ENCODE measurements at regions of chr6 and their contacts with region 1.

Region 1: DNA sequence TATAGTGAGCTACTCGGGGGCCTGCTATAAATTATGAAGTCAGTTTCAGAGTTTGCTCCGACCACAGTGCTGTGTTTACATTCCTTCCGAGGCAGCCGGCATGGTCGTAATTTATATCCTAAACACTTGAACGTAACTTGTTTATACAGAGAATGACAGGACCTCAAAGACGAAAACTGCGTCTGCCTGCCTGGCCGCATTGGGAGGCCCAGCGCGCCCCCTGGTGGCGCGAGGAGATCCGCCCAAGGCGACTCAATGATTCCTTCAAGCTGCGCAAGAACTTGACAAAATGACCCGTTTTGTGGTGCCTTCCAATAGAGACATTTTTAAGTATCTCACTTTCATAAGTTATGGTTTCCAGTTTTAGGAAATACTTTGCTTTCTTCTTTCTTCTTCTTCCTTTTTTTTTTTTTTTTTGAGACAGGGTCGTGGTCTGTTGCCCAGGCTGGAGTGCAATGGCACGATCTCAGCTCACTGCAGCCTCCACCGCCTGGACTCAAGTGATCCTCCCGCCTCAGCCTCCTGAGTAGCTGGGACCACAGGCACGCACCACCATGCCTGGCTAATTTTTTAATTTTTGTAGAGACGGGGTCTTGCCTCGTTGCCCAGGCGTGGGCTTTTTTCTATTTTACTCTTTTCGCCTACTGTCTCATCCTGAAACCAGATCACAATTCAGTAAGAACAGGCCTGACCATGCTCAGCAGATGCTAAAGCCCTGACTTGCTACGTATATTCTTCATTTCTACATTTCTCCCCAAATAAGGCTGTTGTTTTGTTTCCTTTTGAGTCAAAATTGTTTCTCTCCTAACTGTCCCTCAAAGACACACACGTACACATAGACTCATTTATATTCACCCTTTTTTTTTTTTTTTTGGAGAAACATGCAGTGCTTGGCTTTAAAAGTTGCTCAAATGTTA is 7.8 kb downstream of the FOXF2 start:
- DNase-seq: peak; percentile 80
- ATAC-seq: peak; percentile 82

Region 2: DNA sequence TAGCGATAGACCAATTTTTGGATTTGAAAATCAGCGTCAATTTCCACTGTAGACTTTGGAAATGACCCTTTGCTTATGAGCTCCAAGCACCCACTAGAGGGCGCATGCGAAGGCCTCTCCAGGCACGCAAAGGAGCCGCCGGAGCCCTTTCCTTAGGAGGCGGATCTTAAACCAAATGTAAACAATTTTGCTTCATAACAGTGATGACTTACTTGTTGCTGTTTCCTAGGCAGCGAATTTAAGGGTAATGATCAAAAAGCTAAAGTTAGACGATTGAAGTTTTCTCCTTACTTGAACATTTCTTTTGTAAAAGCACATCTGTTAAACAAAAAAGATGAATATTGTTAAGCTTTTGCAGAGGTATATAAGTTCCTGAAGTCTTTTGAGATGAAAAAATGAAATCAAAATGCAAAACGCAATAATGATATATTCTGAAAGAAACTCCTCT is 675.1 kb before region 1 on chr6:
- intact Hi-C with region 1: loop called (anchors 10 kb)
- DNase-seq: peak; percentile 82
- ATAC-seq: peak; percentile 82

Region 3: DNA sequence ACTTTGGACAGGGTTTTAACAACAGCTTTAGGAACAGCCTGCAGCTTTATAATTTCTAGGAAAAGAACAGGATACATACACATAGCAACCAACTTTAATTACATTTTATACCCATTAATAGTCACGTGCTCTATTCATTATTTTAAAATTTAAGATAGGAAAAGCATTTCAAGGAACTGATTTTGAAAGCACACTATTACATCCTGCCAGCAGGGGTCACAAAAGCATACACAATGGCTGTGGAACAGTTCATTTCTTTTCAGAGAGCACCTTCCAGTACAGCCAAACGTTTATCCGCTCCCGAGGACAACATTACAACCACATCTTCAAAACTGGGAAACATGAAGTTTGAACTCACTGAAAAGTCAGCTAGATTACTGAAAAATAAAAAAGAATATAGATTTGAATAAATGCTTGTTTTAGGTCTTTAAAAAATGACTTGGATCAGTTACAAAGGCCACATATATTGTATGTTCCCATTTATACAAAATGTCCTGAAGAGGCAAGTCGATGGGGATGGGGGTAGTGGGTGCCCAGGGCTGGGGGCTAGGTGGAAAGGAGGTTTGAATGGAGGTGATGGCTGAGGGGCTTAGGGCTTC is 599.6 kb before region 1 on chr6:
- intact Hi-C with region 1: loop called (anchors 5 kb)
- DNase-seq: no peak
- ATAC-seq: peak; percentile 63

Region 4: GRCh38 chr6:1445650-1446330 is 48.6 kb after region 1 on chr6:
- intact Hi-C with region 1: no loop called
- DNase-seq: no peak
- ATAC-seq: no peak